ENCODE measurements at regions of chr3 and their contacts with region 1.

Region 1: GRCh38 chr3:8519156-8519555 is 17.5 kb downstream of the LMCD1 start:
- DNase-seq: no peak
- ATAC-seq: no peak
- H3K4me3 ChIP-seq: no peak overlapping the region
- H3K27ac ChIP-seq: no peak overlapping the region
- H3K4me1 ChIP-seq: no peaks in the 10 kb centered on the region; the same call in 1 of the 2 replicates
- H3K27me3 ChIP-seq: no peaks in the 10 kb centered on the region
- CTCF ChIP-seq: no peak
- EP300 ChIP-seq: no peak
- POLR2A ChIP-seq: no peak
- RAD21 ChIP-seq: no peak

Region 2: GRCh38 chr3:8506571-8507061 is 12.5 kb before region 1 on chr3:
- CTCF ChIA-PET with region 1: interaction called, 4 read pairs
- POLR2A ChIA-PET with region 1: interaction called, 8 read pairs
- RAD21 ChIA-PET with region 1: interaction called, 4 read pairs
- SMC1A ChIA-PET with region 1: interaction called, 16 read pairs
- in situ Hi-C with region 1: no loop called
- intact Hi-C with region 1: no loop called
- DNase-seq: no peak
- ATAC-seq: no peak
- H3K4me3 ChIP-seq: no peak overlapping the region
- H3K27ac ChIP-seq: no peak overlapping the region
- H3K4me1 ChIP-seq: peaks cover 18% of the 10 kb centered on the region
- H3K27me3 ChIP-seq: no peaks in the 10 kb centered on the region
- CTCF ChIP-seq: no peak
- EP300 ChIP-seq: no peak
- POLR2A ChIP-seq: no peak
- RAD21 ChIP-seq: no peak

Region 3: GRCh38 chr3:8776406-8776805 is 257.2 kb after region 1 on chr3:
- CTCF ChIA-PET with region 1: no interaction called
- POLR2A ChIA-PET with region 1: no interaction called
- RAD21 ChIA-PET with region 1: no interaction called
- SMC1A ChIA-PET with region 1: no interaction called
- in situ Hi-C with region 1: no loop called
- intact Hi-C with region 1: no loop called
- DNase-seq: no peak
- ATAC-seq: no peak
- H3K4me3 ChIP-seq: no peak overlapping the region
- H3K27ac ChIP-seq: no peak overlapping the region
- H3K4me1 ChIP-seq: no peaks in the 10 kb centered on the region; the same call in 1 of the 2 replicates
- H3K27me3 ChIP-seq: no peaks in the 10 kb centered on the region
- CTCF ChIP-seq: no peak
- EP300 ChIP-seq: no peak
- POLR2A ChIP-seq: no peak
- RAD21 ChIP-seq: no peak

Region 4: GRCh38 chr3:8837162-8837561 is 318.0 kb after region 1 on chr3:
- CTCF ChIA-PET with region 1: no interaction called
- POLR2A ChIA-PET with region 1: no interaction called
- RAD21 ChIA-PET with region 1: no interaction called
- SMC1A ChIA-PET with region 1: no interaction called
- in situ Hi-C with region 1: no loop called
- intact Hi-C with region 1: no loop called
- DNase-seq: no peak
- ATAC-seq: no peak
- H3K4me3 ChIP-seq: no peak overlapping the region
- H3K27ac ChIP-seq: no peak overlapping the region
- H3K4me1 ChIP-seq: no peaks in the 10 kb centered on the region
- H3K27me3 ChIP-seq: no peaks in the 10 kb centered on the region
- CTCF ChIP-seq: no peak
- EP300 ChIP-seq: no peak
- POLR2A ChIP-seq: no peak
- RAD21 ChIP-seq: no peak

Measured in GM12878 (cell line).